ENCODE measurements at regions of chr12 and their contacts with region 1.

Region 1: DNA sequence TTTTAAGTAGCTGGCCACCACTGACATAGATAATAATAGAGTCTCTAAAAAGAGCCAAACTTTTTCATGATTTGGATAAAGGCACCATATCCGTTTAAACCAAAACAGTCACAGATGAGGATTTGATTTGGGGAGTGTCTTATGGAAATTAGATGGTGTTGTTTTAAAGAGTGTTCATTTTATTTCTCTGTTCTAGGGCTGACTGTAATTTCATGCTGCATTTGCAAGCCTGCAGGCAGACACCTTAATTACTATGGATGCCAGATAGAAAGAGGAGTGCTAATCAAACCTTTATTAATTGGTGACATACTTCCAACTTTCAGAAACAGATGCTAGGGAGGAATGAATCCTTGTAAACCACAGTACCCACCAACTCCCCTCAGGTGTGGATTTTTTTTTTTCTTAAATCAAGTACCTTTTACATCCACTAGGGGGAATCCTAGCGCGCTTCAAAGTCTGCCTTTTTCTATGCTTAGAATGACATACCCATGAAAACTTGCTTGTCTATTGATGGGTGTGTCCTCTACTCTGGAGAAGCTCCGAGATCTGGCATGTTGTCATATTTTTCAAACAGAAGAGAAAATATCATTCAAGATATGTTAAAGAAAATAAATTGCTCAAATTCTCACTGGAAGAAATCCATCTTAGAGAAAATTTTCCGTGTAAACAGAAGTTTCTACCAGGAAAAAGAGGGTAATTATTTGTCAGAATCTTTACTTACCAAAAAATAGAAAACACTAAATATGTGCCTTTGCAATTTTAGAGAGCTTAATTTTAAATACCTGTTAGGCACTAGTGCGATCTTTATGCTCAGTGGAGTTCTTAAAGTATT is 14.2 kb upstream of the PLXNC1 start:
- DNase-seq: no peak
- H3K4me3 ChIP-seq: no peak overlapping the region
- H3K27ac ChIP-seq: no peak overlapping the region
- H3K4me1 ChIP-seq: no peaks in the 10 kb centered on the region
- H3K27me3 ChIP-seq: peaks cover 0 to 5% of the 10 kb centered on the region in 2 donors
- CTCF ChIP-seq: peak; percentile 62 to 78

Region 2: GRCh38 chr12:94435511-94435927 is 301.3 kb after region 1 on chr12:
- intact Hi-C with region 1: loop called (anchors 10 kb)
- DNase-seq: no peak
- H3K4me3 ChIP-seq: no peak overlapping the region
- H3K27ac ChIP-seq: no peak overlapping the region
- H3K4me1 ChIP-seq: peaks cover 0 to 7% (median 0%) of the 10 kb centered on the region in 4 donors
- H3K27me3 ChIP-seq: no peaks in the 10 kb centered on the region
- CTCF ChIP-seq: no peak

Region 3: DNA sequence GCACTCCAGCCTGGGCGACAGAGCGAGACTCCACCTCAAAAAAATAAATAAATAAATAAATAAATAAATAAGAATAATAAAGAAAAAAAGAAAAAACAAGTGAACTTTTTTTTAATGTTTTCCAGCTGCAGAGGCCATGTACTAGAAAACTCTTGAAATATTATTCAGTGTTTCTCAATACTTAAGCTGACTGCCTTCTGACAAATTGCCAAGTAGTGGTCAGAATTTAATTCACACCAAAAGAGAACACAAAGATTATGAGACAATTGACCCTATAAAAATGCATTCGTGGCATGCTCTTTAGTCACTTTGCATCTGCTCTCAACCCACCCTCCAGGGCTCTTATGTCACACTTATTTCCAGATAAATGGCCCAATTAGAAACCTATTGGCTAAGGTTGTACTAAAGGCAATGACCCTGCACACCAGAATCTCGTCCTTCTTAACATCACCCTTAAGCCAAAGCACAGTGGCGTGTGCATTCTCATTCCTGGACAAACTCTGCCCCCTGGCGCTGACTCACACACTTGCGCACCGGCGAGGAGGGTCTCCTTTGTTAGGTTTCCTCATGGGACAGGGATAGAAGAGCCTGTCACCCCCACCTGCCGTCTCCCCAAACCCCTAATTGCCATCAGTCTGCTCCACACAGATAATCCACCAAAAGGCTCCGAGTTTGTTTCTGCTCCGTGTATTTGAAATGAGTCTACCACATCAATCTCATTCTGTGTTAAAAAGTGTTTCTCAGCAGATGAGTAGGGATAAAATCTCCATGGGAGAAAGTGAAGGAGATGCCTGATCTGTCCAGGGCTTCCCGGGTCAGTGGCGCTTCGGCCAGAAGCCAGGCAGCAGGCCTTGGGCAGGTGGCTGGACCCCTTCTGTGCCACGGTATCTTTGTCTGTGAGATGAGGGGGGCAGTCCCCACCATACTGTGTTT is 398.6 kb after region 1 on chr12:
- intact Hi-C with region 1: loop called (anchors 2 kb)
- DNase-seq: peak; percentile 70
- H3K4me3 ChIP-seq: no peak overlapping the region
- H3K27ac ChIP-seq: no peak overlapping the region
- H3K4me1 ChIP-seq: peaks cover 0 to 5% (median 0%) of the 10 kb centered on the region in 4 donors
- H3K27me3 ChIP-seq: peaks cover 0 to 5% of the 10 kb centered on the region in 2 donors
- CTCF ChIP-seq: peak; percentile 72 to 79

Measured in tibial artery (tissue), 4 donors.